ENCODE measurements at regions of chr2 and their contacts with region 1.

Region 1: DNA sequence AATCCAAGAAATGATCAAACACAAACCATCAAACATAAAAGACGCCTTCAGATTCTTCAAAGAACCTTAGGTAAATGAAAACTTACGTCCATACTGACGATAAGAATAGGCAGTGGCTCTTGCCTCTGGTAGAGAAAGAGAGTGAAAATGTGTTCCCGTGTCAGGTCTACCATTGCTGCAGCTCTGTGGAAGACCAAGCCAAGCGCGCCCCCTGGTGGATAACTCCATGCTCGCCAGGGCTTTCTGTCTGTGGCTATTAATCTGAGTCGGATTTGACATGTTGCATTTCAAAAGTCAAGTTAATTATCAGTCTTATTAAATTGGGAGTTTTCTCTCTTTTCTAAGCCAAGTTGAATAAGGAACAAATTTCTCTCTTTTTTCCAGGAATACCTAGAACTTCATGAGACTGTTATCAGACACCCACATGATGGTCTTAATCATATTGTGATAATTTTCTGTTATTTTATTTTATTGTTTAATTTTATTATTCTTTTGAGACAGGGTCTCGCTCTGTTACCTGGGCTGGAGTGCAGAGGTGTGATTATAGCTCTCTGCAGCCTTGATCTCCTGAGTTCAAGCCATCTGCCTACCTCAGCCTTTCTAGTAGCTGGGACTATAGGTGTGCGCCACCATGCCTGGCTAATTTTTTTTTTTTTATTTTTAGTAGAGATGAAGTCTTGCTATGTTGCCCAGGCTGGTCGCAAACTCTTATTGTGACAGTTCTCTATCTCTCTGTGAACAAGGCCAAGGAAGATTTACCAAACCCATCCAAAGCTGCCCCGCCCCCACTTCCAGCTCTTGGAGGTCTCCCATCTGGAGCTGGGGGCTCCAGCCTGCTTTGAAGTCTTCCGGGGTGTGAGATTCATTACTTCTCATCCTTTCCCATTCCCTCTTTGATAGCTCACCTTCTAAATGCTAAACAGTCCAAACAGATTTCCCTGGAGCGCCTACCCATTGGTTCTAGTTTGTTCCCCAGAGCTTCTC is 15.8 kb upstream of the ZAP70 start:
- DNase-seq: peak; percentile 96
- ATAC-seq: peak; percentile 91

Region 2: GRCh38 chr2:97663965-97664635 is 33.4 kb before region 1 on chr2 and contains the start of gene ACTR1B:
- intact Hi-C with region 1: loop called (anchors 1 kb)
- DNase-seq: peak; percentile 98
- ATAC-seq: peak; percentile 95
- total RNA-seq, gene ACTR1B: 60.3 TPM

Region 3: DNA sequence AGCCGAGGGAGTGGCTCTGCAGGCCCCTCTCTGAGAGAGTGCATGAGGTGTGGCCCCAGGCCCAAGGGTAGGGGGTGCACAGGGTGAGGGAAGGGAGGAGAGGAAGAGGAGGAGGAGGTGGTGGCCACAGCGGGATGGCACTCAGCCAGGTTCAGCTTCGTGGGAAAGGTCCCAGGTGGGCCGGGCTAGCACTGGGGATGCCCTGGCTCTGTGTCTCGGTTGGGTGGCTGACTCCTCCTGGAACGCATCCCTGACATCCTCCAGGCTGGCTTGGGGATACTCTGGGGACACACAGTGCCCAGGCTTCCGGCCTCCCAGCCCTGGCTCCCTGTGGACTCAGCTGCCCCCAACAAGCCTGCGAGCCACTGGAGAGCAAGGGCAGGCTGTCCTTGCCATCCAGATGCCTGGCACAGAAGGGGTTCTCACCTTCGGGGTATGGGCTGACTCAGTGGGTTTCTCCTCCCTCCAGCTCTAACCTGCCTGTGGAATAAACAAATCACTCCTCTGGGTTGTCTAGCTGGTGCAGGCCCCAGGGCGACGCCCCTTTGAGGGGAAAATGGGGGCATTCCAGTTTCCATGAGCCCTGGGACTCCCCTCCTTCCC is 15.2 kb after region 1 on chr2:
- intact Hi-C with region 1: no loop called
- DNase-seq: peak; percentile 37
- ATAC-seq: no peak

Region 4: DNA sequence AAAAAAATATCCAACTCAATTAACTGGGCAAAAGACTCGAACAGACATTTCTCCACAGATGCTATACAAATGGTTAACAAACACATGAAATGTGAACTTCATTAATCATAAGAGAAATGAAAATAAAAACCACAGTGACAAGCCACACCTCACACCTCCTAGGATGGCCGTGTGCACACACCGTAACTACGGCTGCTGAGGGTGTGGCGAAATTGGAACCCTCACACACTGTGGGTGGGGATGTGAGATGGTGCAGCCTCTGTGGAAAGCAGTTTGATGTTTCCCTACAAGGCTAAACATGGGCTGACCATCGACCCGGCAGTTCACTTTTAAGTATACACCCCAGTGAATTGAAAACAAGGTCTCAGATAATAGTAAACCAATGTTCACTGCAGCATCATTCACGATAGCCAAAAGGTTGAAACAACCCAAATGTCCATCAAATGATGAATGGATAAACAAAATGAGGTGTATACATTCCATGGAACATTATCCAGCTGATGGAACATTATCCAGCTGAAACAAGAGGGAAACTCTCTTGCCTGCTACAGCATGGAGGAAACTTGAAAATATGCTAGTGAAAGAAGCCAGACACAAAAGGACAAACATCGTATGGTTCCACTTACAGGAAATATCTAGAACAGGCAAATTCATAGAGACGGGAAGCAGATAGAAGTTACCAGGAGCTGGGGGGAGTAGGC is 48.1 kb after region 1 on chr2:
- intact Hi-C with region 1: loop called (anchors 2 kb)
- DNase-seq: no peak
- ATAC-seq: no peak

Region 5: GRCh38 chr2:97844311-97844859 is 146.8 kb after region 1 on chr2:
- intact Hi-C with region 1: no loop called
- DNase-seq: no peak
- ATAC-seq: no peak

Region 6: GRCh38 chr2:97885841-97886240 is 188.3 kb after region 1 on chr2:
- intact Hi-C with region 1: no loop called
- DNase-seq: no peak
- ATAC-seq: no peak

Region 7: DNA sequence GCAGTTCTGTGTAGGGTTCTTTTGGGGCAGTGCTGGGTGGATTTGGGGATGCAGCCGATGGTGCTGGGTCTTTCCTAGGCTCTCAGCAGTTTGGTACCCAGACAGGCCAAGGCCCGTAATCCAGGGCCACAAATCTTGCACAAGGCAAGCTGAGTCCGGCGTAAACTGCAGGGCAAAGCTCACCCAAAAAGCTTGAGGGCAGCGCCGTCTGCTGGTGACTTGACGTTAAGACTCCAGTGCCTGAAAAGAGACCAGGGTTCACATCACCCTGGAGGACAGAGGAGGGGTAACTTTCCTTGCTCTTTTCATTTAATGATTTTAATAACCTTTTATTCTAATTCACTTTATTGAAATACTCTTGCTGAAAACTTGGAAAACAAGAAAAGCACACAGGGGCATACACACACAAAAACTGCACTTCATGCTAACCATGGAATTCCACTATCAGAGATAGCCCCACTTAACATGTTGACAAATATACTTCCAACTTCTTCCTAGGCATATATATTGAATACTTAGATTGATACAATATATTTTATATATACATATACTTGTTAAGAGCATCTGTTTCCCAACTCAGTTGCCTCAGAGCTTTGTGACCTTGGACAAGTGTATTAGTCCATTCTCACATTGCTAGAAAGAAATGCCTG is 687.6 kb after region 1 on chr2:
- intact Hi-C with region 1: loop called (anchors 2 kb)
- DNase-seq: peak; percentile 83
- ATAC-seq: peak; percentile 62